GM13977 (cell line): ENCODE measurements at regions of chr4 and their contacts with region 1.

Region 1: GRCh38 chr4:112099701-112100297 is 45.5 kb upstream of the FAM241A start:
- DNase-seq: peak; percentile 46
- CTCF ChIP-seq: peak; percentile 54

Region 2: DNA sequence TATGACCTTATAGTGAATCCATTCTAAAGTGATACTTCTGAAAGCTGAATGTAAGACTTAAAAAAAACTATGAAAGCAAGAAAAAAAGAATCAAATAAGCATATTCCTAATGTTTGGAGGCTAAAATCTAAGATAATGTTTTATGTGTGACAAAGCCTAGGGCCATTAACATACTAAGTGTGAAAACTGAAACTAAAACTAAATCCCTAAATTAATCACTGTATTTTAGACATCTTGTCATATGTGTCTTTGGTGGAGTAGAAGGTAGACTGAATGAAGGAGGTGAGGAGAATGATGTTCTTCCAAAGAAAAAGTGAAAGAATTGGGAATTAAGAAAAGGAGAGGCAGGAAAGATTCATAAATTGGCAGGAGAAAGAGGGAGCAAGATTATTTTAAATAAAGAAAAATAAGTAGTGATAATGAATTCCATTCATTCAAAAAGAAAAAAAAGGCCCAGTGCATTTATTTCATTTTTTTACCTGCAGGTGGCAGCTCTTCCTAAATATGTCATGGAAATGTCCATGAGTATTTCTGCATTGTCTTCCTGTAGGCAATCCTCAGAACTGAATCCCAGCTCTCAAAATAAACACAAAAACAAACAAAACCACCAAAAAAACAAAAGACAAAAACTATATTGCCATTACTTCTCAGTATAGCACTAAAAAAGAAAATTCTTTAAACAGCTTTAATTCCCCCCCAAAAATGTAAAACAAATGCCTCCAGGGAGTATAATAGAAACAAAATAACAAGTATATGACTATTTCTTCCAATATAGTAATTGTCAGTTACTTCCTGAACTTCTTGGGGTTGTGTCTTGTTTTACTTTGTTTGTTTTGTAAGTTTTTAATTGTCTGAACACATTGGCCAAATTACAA is 114.8 kb after region 1 on chr4:
- in situ Hi-C with region 1: no loop called
- DNase-seq: no peak
- CTCF ChIP-seq: peak; percentile 31

Region 3: GRCh38 chr4:112231779-112232713 is 132.2 kb after region 1 on chr4 and contains the start of gene AP1AR:
- in situ Hi-C with region 1: loop called (anchors 10 kb)
- DNase-seq: peak; percentile 90
- CTCF ChIP-seq: peak; percentile 33

Region 4: DNA sequence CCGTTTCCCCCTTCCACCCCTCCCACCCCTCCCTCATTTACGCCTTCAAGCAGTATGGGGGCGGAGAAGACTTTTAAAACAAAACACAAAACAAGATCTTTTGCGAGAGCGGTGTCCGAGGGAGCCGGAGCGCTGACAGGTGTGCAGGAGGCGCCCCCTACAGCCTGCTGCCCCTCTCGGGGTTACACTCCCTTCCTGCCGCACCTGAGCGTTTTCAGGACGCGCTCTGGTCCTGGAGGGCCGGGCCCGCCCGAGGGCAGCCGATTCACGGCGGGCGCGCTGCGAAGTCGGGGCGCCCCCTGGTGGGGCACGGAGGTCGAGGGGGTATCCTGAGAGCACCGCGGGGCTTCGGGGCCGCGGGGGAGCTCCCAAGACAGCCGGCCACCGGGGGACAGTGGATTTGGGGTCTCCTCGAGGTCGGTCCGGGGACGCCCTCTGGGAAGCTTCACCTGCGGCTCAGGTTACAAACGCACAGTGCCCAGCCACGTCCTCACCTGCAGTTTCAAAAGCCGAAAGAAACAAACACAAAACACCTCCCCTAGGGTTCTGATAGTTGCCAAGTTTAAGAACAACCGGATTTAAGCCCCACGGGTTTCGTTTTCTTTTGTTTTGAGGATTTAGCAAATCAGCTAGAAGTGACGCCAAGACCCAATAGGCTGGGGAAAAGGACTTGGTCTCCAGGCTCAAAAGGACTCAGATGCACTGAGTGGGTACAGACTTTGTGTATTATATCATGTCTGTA is 424.1 kb after region 1 on chr4:
- in situ Hi-C with region 1: loop called (anchors 10 kb)
- DNase-seq: peak; percentile 88
- CTCF ChIP-seq: peak; percentile 94